ENCODE measurements at regions of chr12 and their contacts with region 1.

Region 1: DNA sequence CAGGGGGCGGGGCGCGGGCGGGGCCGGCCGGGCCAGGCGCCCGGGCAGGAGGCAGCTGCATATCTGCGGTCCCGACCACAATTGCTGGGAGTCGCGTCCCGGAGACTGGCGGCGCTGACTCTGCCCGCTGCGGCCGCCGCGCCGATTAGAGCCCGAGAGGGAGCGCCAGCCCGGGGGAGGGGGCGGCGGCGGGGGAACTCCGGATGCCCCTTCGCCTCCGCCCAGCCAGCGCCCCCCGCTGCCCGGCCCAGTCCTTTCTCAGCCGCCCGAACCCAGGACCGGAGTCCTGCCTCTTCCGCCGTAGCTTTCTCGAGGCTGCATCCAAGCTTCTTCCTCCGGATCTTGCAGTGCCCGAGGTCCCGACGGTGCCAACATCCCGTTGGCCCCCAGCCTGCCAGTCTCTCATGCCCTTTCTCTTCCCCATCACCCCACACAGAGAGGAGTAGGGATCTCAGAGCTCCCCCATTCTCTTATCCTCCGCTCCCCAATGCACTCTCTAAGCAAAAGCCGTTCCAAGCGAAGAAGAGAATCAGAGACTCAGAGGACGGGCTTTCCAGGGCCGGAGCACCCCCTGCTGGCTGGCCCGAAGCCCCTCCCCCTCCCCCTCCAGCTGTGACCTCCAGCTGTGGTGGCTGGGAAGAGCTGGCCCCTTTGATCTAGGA is 8.8 kb upstream of the SP7 start:
- DNase-seq: peak; percentile 85
- ATAC-seq: peak; percentile 91
- H3K4me3 ChIP-seq: peak overlapping the region in 4 of 5 experiments; percentile 46 to 71 (median 66)
- H3K4me3 Mint-ChIP-seq: peak overlapping the region; percentile 100
- H3K27ac ChIP-seq: no peak overlapping the region
- H3K27ac Mint-ChIP-seq: peak overlapping the region; percentile 85
- H3K4me1 ChIP-seq: peaks cover 6 to 13% of the 10 kb centered on the region in 2 donors
- H3K4me1 Mint-ChIP-seq: peaks cover 14% of the 10 kb centered on the region
- H3K27me3 ChIP-seq: peaks cover 0 to 2% (median 0%) of the 10 kb centered on the region in 4 experiments
- H3K27me3 Mint-ChIP-seq: peaks cover 6% of the 10 kb centered on the region
- CTCF ChIP-seq: peak; percentile 72

Region 2: DNA sequence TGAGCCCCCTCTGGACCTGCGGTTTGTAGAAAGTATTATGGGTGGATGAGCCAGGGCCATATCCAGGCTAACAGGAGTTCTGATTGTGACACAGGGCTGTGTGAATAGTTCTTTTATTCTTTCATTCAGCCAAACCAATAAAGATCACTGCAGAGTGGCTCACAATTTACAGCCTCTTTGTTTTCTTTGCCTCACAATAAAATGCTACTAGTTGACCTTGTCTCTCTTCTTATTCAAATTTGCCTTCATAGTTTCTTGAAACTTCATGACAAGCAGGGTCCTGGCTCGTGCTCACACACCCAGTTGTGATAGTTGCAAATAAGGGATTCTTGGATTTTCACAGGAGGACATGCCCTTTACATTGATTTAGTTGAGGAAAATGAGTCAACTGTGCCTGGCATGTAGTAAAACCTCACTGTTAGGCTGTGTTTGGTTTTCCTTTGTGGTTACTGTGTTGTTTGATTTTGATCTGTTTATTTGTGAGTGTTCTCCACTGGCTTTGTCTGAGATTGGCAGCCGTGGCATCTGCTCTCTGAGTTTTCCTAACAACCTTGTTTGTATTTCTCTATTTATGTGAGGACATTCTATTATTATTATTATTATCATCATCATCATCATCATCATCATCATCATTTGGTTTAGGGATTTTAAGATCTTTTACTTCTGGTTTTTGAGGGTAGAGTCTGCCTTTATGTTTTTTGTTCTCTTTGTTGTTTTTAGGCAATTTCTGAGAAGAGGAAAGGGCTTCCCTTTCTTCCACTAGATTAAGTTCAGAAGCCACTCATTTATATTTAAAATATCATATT is 890.3 kb before region 1 on chr12:
- CTCF ChIA-PET with region 1: no interaction called
- POLR2A ChIA-PET with region 1: no interaction called
- intact Hi-C with region 1: no loop called
- DNase-seq: no peak
- ATAC-seq: no peak
- H3K4me3 ChIP-seq: no peak overlapping the region
- H3K4me3 Mint-ChIP-seq: no peak overlapping the region
- H3K27ac ChIP-seq: no peak overlapping the region
- H3K27ac Mint-ChIP-seq: no peak overlapping the region
- H3K4me1 ChIP-seq: no peaks in the 10 kb centered on the region
- H3K4me1 Mint-ChIP-seq: no peaks in the 10 kb centered on the region
- H3K27me3 ChIP-seq: peaks cover 0 to 2% (median 0%) of the 10 kb centered on the region in 4 experiments
- H3K27me3 Mint-ChIP-seq: peaks cover 20% of the 10 kb centered on the region
- CTCF ChIP-seq: no peak

Region 3: GRCh38 chr12:53200458-53201176 is 144.3 kb before region 1 on chr12:
- CTCF ChIA-PET with region 1: interaction called, 14 read pairs
- POLR2A ChIA-PET with region 1: no interaction called
- intact Hi-C with region 1: no loop called
- DNase-seq: peak; percentile 71
- ATAC-seq: peak; percentile 59
- H3K4me3 ChIP-seq: peak overlapping the region in 3 of 5 experiments; percentile 17 to 54 (median 23)
- H3K4me3 Mint-ChIP-seq: peak overlapping the region; percentile 70
- H3K27ac ChIP-seq: peak overlapping the region; percentile 39 to 58
- H3K27ac Mint-ChIP-seq: peak overlapping the region; percentile 80
- H3K4me1 ChIP-seq: peaks cover 79 to 86% of the 10 kb centered on the region in 2 donors
- H3K4me1 Mint-ChIP-seq: peaks cover 68% of the 10 kb centered on the region
- H3K27me3 ChIP-seq: no peaks in the 10 kb centered on the region
- H3K27me3 Mint-ChIP-seq: no peaks in the 10 kb centered on the region
- CTCF ChIP-seq: no peak

Region 4: DNA sequence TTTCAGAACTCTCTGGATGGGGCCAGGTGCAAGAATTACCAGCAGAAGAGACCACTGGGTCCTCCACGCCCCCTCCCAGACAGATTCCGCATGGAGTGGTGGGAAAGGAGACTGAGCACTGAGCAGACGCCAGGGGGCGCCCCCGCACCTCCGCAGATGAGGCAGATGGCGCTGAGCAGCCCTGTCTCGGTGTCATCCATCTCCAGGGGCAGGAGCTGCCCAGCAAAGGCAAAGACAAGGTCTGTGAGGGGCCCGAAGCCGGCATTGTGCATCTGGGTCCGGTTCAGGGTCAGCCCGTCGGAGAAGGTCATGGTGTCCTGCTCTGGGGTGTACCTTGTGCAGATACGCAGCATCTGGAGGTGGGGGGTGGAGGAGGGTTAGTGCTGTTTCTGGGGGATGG is 131.6 kb before region 1 on chr12:
- CTCF ChIA-PET with region 1: interaction called, 67 read pairs
- POLR2A ChIA-PET with region 1: no interaction called
- intact Hi-C with region 1: loop called (anchors 1 kb)
- DNase-seq: peak; percentile 87
- ATAC-seq: peak; percentile 65
- H3K4me3 ChIP-seq: no peak overlapping the region
- H3K4me3 Mint-ChIP-seq: no peak overlapping the region
- H3K27ac ChIP-seq: no peak overlapping the region
- H3K27ac Mint-ChIP-seq: peak overlapping the region; percentile 46
- H3K4me1 ChIP-seq: peaks cover 57 to 65% of the 10 kb centered on the region in 2 donors
- H3K4me1 Mint-ChIP-seq: peaks cover 70% of the 10 kb centered on the region
- H3K27me3 ChIP-seq: no peaks in the 10 kb centered on the region
- H3K27me3 Mint-ChIP-seq: no peaks in the 10 kb centered on the region
- CTCF ChIP-seq: peak; percentile 97

Region 5: DNA sequence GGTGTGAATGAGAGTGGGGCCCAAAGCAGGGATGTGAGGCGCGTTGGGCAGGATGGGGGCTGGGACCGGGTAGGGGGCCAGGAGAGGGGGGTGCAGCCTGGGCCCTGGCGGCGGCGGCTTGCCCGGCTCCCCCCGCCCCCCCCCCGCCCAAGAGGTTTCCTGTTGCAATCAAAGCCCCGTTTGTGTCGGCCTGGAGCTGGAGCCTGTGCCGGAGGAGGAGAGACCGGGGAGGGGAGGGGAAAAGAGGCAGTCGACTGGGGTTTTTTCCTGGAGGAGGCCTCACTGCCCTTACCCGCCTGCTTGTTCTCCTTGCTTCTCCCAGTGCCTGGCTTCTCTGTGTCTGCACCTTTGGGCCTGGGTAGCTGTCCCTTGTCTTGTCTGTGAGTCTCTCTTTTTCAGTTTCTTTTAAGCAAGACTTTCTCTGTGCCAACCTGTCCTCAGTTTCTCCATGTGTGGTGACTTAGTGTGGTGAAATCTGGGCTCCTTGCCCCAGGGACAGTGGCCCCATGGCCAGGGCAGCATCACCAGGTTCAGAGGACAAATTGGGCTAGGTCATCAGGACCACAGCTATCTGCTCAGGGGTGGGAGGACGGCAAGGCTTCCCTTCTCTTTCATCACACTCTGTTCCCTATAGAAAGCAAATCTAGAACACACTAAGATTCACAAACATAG is 121.4 kb before region 1 on chr12:
- CTCF ChIA-PET with region 1: no interaction called
- POLR2A ChIA-PET with region 1: no interaction called
- intact Hi-C with region 1: no loop called
- DNase-seq: no peak
- ATAC-seq: no peak
- H3K4me3 ChIP-seq: no peak overlapping the region
- H3K4me3 Mint-ChIP-seq: peak overlapping the region; percentile 23
- H3K27ac ChIP-seq: no peak overlapping the region
- H3K27ac Mint-ChIP-seq: peak overlapping the region; percentile 10
- H3K4me1 ChIP-seq: peaks cover 13 to 30% of the 10 kb centered on the region in 2 donors
- H3K4me1 Mint-ChIP-seq: peaks cover 28% of the 10 kb centered on the region
- H3K27me3 ChIP-seq: no peaks in the 10 kb centered on the region
- H3K27me3 Mint-ChIP-seq: no peaks in the 10 kb centered on the region
- CTCF ChIP-seq: no peak

Region 6: GRCh38 chr12:53379389-53380103 is 34.6 kb after region 1 on chr12:
- CTCF ChIA-PET with region 1: interaction called, 132 read pairs
- POLR2A ChIA-PET with region 1: interaction called, 3 read pairs
- intact Hi-C with region 1: no loop called
- DNase-seq: peak; percentile 99
- ATAC-seq: peak; percentile 70
- H3K4me3 ChIP-seq: peak overlapping the region; percentile 60 to 93 (median 64)
- H3K4me3 Mint-ChIP-seq: no peak overlapping the region
- H3K27ac ChIP-seq: peak overlapping the region; percentile 76 to 89
- H3K27ac Mint-ChIP-seq: no peak overlapping the region
- H3K4me1 ChIP-seq: peaks cover 39 to 46% of the 10 kb centered on the region in 2 donors
- H3K4me1 Mint-ChIP-seq: peaks cover 33% of the 10 kb centered on the region
- H3K27me3 ChIP-seq: no peaks in the 10 kb centered on the region
- H3K27me3 Mint-ChIP-seq: no peaks in the 10 kb centered on the region
- CTCF ChIP-seq: no peak

Region 7: GRCh38 chr12:53508534-53509199 is 163.7 kb after region 1 on chr12:
- CTCF ChIA-PET with region 1: interaction called, 13 read pairs
- POLR2A ChIA-PET with region 1: no interaction called
- intact Hi-C with region 1: no loop called
- DNase-seq: peak; percentile 87
- ATAC-seq: peak; percentile 100
- H3K4me3 ChIP-seq: no peak overlapping the region
- H3K4me3 Mint-ChIP-seq: no peak overlapping the region
- H3K27ac ChIP-seq: peak overlapping the region; percentile 30 to 31
- H3K27ac Mint-ChIP-seq: peak overlapping the region; percentile 64
- H3K4me1 ChIP-seq: peaks cover 6 to 8% of the 10 kb centered on the region in 2 donors
- H3K4me1 Mint-ChIP-seq: peaks cover 10% of the 10 kb centered on the region
- H3K27me3 ChIP-seq: no peaks in the 10 kb centered on the region
- H3K27me3 Mint-ChIP-seq: no peaks in the 10 kb centered on the region
- CTCF ChIP-seq: peak; percentile 95

Measured in B cell (primary cell).